Mammary epithelial cell (primary cell): ENCODE measurements at regions of chr20 and their contacts with region 1.

Region 1: GRCh38 chr20:38748097-38748860 is at the start of gene ACTR5:
- DNase-seq: peak; percentile 86
- H3K4me3 ChIP-seq: peak within 1 kb of the TSS; percentile 79 to 98 (median 92)
- H3K27ac ChIP-seq: peak within 1 kb of the TSS; percentile 71
- H3K4me1 ChIP-seq: peaks cover 5% of the 10 kb centered on the region
- H3K27me3 ChIP-seq: no peaks in the 10 kb centered on the region
- CTCF ChIP-seq: no peak
- total RNA-seq, gene ACTR5: 6.5 to 6.8 TPM

Region 2: GRCh38 chr20:38640521-38640920 is 107.8 kb before region 1 on chr20:
- CTCF ChIA-PET with region 1: no interaction called
- dilution Hi-C with region 1: no loop called
- in situ Hi-C with region 1: loop called in 1 of 2 experiments (anchors 5 kb)
- intact Hi-C with region 1: no loop called
- DNase-seq: no peak
- H3K4me3 ChIP-seq: no peak overlapping the region
- H3K27ac ChIP-seq: no peak overlapping the region
- H3K4me1 ChIP-seq: peaks cover 6% of the 10 kb centered on the region
- H3K27me3 ChIP-seq: no peaks in the 10 kb centered on the region
- CTCF ChIP-seq: no peak

Region 3: DNA sequence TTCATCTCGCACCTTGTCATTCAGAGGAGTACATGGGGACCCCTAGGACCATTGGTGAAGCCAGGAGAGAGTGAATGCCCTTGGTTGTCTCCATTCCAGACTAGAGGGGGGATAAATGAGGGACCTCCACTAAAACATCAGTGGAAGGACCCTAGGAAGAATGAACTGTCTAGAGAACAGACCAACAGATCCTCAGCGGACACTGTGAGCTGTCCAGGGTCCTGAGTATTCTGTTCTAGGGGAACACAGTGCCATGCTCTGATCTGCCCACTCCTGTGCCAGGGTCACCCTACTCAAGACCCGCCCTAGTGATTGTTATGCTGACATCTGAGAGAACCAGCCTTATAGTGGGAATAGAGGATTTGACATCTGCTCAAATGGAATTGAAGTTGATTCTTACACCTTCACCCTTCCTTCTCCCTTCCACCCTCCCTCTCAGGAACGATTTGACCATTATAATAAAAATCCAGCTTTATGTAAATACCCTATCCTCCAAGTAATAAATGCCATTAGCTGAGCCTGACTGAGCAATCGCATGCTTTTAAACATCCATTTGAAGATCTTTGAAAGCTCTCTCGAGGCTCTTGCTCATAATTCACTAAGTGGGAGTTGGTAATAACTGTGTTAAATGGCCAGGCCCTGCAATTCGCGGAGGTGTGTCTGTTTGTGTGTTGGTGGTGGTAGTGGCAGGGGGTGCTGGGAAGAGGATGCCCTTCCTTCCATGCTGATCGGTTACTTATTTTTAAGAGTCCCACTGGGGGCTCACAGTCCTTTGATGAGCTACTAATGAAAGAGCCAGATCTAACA is 67.6 kb before region 1 on chr20:
- CTCF ChIA-PET with region 1: no interaction called
- dilution Hi-C with region 1: no loop called
- in situ Hi-C with region 1: no loop called
- intact Hi-C with region 1: no loop called
- DNase-seq: peak; percentile 35
- H3K4me3 ChIP-seq: no peak overlapping the region
- H3K27ac ChIP-seq: no peak overlapping the region
- H3K4me1 ChIP-seq: no peaks in the 10 kb centered on the region
- H3K27me3 ChIP-seq: no peaks in the 10 kb centered on the region
- CTCF ChIP-seq: no peak

Region 4: GRCh38 chr20:38818113-38819065 is 70.1 kb after region 1 on chr20:
- CTCF ChIA-PET with region 1: no interaction called
- dilution Hi-C with region 1: loop called (anchors 5 kb)
- in situ Hi-C with region 1: no loop called
- intact Hi-C with region 1: no loop called
- DNase-seq: no peak
- H3K4me3 ChIP-seq: no peak overlapping the region
- H3K27ac ChIP-seq: no peak overlapping the region
- H3K4me1 ChIP-seq: no peaks in the 10 kb centered on the region
- H3K27me3 ChIP-seq: no peaks in the 10 kb centered on the region
- CTCF ChIP-seq: no peak

Region 5: GRCh38 chr20:38919683-38920082 is 171.4 kb after region 1 on chr20:
- CTCF ChIA-PET with region 1: no interaction called
- dilution Hi-C with region 1: no loop called
- in situ Hi-C with region 1: no loop called
- intact Hi-C with region 1: no loop called
- DNase-seq: no peak
- H3K4me3 ChIP-seq: no peak overlapping the region
- H3K27ac ChIP-seq: no peak overlapping the region
- H3K4me1 ChIP-seq: no peaks in the 10 kb centered on the region
- H3K27me3 ChIP-seq: no peaks in the 10 kb centered on the region
- CTCF ChIP-seq: no peak

Region 6: DNA sequence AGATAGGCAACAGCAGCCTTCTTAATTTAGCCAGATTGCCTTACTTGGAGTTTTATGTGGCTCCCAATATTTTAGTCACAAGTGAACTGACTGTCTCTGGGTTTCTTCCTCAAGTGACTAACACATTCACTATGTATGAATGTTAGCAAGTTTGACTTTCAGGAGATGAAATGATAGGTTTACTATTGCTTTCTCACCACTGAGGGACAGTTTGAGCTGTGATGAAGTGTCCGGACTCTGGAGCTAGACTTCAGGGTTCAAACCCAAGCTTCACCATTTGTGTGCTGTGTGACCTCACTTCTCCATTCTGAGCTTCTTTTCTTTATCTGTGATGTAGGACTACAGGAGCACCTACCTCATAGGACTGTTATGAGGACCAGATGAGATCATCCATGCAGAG is 222.0 kb after region 1 on chr20:
- CTCF ChIA-PET with region 1: no interaction called
- dilution Hi-C with region 1: no loop called
- in situ Hi-C with region 1: no loop called
- intact Hi-C with region 1: no loop called
- DNase-seq: peak; percentile 73
- H3K4me3 ChIP-seq: no peak overlapping the region
- H3K27ac ChIP-seq: peak overlapping the region; percentile 22
- H3K4me1 ChIP-seq: peaks cover 33% of the 10 kb centered on the region
- H3K27me3 ChIP-seq: no peaks in the 10 kb centered on the region
- CTCF ChIP-seq: no peak

Region 7: DNA sequence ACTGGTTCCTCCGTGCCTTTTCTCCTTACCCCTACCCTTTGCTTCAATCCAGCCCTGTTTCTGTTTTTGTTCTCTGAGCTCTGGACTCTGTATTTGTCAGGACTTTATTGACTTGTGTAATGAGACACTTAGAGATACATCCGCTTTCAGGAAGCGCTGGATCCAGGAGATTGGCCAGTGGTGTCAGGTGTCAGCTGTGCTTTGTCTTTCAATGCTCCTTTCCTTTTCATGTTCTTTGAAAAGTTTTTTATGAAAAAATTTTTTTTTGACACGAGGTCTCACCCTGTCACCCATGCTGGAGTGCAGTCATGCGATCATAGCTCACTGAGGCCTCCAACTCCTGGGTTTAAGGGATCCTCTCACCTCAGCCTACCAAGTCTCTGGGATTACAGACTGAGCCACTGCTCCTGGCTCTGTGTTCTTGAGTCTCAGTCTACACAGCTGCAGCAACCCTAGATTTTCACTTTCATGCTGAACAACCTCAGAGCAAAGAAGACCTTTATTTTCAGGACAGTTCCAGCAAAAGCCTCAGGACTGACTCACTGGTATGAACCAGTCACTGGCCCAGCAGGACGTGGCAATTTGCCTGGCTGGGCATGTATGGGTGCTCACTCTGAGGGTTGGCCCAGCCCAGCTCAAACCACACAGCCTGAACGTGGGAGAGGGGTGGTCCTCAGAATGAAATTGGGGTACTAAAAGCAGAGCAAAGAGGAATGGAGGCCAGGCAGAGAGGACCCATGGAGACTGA is 322.4 kb after region 1 on chr20:
- CTCF ChIA-PET with region 1: no interaction called
- dilution Hi-C with region 1: no loop called
- in situ Hi-C with region 1: no loop called
- intact Hi-C with region 1: no loop called
- DNase-seq: peak; percentile 72
- H3K4me3 ChIP-seq: no peak overlapping the region
- H3K27ac ChIP-seq: peak overlapping the region; percentile 17
- H3K4me1 ChIP-seq: peaks cover 18% of the 10 kb centered on the region
- H3K27me3 ChIP-seq: no peaks in the 10 kb centered on the region
- CTCF ChIP-seq: no peak